Naive thymus-derived CD4-positive, alpha-beta T cell (primary cell): ENCODE measurements at regions of chr4 and their contacts with region 1.

Region 1: GRCh38 chr4:56799824-56800756 is 21.4 kb downstream of the SPINK2 start:
- DNase-seq: peak; percentile 57 to 88 (median 81)
- ATAC-seq: peak; percentile 99
- H3K4me3 ChIP-seq: peak overlapping the region; percentile 56
- H3K4me3 Mint-ChIP-seq: peak overlapping the region; percentile 91 to 100 (median 94)
- H3K27ac ChIP-seq: peak overlapping the region; percentile 72
- H3K27ac Mint-ChIP-seq: peak overlapping the region; percentile 40 to 96 (median 92)
- H3K4me1 ChIP-seq: peaks cover 0 to 2% of the 10 kb centered on the region in 2 donors
- H3K4me1 Mint-ChIP-seq: peaks cover 5 to 33% (median 22%) of the 10 kb centered on the region in 7 donors
- H3K27me3 ChIP-seq: no peaks in the 10 kb centered on the region
- H3K27me3 Mint-ChIP-seq: peaks cover 0 to 28% (median 0%) of the 10 kb centered on the region in 5 donors

Region 2: DNA sequence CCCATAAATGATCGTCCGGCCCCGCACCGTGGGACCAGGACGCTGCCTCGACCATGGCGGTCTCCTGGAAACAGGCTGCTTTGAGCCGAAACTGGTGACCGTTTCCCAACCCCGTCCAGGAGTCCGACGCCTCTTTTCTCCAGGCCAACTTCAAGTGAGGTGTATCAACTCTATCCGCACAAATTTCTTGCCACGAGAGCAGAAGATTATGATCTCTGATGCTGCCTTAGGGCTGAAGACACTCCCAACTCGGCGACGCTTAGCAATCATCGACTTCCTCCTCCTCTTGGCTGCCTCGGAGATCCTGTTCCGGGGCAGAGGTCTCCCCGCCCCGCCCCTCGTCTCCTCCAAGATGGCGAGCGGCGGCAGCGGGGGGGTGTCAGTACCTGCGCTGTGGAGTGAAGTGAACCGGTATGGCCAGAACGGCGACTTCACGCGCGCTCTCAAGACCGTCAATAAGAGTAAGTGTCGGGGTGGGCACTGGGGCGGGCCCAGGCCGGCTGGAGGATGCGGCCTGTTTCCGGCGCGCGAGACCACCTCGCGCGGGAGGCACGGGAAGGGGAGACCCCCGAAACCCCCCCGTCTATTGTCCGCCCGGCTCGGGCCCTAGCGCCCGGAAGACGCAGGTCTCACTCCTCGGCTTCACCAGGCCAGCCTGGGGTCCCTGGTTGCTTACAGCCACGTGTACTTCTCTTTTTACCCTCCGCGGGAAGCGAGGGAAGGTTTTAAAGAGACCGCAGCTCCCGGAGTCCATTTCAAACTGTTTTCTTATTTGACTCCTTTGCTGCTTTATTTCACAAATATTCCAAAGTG is 332.6 kb before region 1 on chr4 and contains the start of gene SRP72:
- CTCF ChIA-PET with region 1: interaction called, 3 read pairs
- POLR2A ChIA-PET with region 1: no interaction called
- intact Hi-C with region 1: loop called (anchors 1 to 5 kb)
- DNase-seq: peak; percentile 80 to 95 (median 88)
- ATAC-seq: peak; percentile 98
- H3K4me3 ChIP-seq: peak within 1 kb of the TSS; percentile 98
- H3K4me3 Mint-ChIP-seq: peak within 1 kb of the TSS; percentile 93 to 100 (median 96)
- H3K27ac ChIP-seq: peak within 1 kb of the TSS; percentile 90
- H3K27ac Mint-ChIP-seq: peak within 1 kb of the TSS; percentile 94 to 99 (median 96)
- H3K4me1 ChIP-seq: peaks cover 25 to 29% of the 10 kb centered on the region in 2 donors
- H3K4me1 Mint-ChIP-seq: peaks cover 46 to 68% (median 62%) of the 10 kb centered on the region in 7 donors
- H3K27me3 ChIP-seq: no peaks in the 10 kb centered on the region
- H3K27me3 Mint-ChIP-seq: no peaks in the 10 kb centered on the region
- total RNA-seq, gene SRP72: 98.4 to 145 (median 109) TPM

Region 3: GRCh38 chr4:56530269-56531148 is 269.6 kb before region 1 on chr4:
- CTCF ChIA-PET with region 1: no interaction called
- POLR2A ChIA-PET with region 1: no interaction called
- intact Hi-C with region 1: loop called in 1 of 2 experiments (anchors 5 kb)
- DNase-seq: peak; percentile 53 to 75 (median 59)
- ATAC-seq: peak; percentile 99
- H3K4me3 ChIP-seq: peak overlapping the region; percentile 91
- H3K4me3 Mint-ChIP-seq: peak overlapping the region in 1 of 10 donors; percentile 70
- H3K27ac ChIP-seq: peak overlapping the region; percentile 44
- H3K27ac Mint-ChIP-seq: peak overlapping the region in 3 of 9 donors; percentile 26 to 55 (median 38)
- H3K4me1 ChIP-seq: peaks cover 0 to 4% of the 10 kb centered on the region in 2 donors
- H3K4me1 Mint-ChIP-seq: peaks cover 0 to 2% (median 0%) of the 10 kb centered on the region in 7 donors
- H3K27me3 ChIP-seq: peaks cover 0 to 4% of the 10 kb centered on the region in 2 donors
- H3K27me3 Mint-ChIP-seq: peaks cover 0 to 22% (median 7%) of the 10 kb centered on the region in 5 donors

Region 4: DNA sequence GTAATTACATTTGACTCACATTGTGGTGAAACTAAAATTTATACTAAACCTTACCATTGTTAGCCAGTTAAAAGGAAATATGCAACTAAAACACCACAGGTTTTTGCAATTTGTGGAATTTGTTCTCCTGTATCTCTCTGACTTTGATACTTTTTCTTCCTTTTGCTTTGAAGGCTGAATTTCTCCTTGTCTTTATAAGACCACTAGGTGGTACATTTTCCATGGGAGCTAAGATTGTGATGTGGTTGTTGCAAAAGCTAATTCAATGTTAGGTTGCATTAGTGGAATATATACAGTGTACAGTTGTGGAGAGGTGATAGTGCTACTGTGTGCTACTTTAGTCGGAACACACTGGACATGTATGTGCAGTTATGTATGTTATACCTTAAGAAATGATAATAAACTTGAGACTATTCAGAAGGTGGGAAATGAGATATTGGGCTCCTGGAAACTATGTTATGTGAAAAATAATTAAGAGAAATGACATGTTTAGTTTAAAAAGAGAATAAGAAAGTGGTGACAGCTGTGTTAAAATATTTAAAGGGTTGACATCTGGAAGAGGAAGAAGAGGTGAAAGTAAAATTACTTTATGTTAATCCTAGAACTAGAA is 224.2 kb before region 1 on chr4:
- CTCF ChIA-PET with region 1: interaction called, 9 read pairs
- POLR2A ChIA-PET with region 1: no interaction called
- intact Hi-C with region 1: loop called (anchors 1 kb)
- DNase-seq: peak in 5 of 9 donors; percentile 7 to 36 (median 14)
- ATAC-seq: peak; percentile 38
- H3K4me3 ChIP-seq: no peak overlapping the region
- H3K4me3 Mint-ChIP-seq: no peak overlapping the region
- H3K27ac ChIP-seq: no peak overlapping the region
- H3K27ac Mint-ChIP-seq: no peak overlapping the region
- H3K4me1 ChIP-seq: no peaks in the 10 kb centered on the region
- H3K4me1 Mint-ChIP-seq: peaks cover 0 to 6% (median 0%) of the 10 kb centered on the region in 7 donors
- H3K27me3 ChIP-seq: no peaks in the 10 kb centered on the region
- H3K27me3 Mint-ChIP-seq: peaks cover 0 to 10% (median 0%) of the 10 kb centered on the region in 5 donors

Region 5: GRCh38 chr4:56668298-56668697 is 131.8 kb before region 1 on chr4:
- CTCF ChIA-PET with region 1: interaction called, 3 read pairs
- POLR2A ChIA-PET with region 1: no interaction called
- intact Hi-C with region 1: loop called (anchors 1 kb)
- DNase-seq: peak in 2 of 9 donors; percentile 25 to 27
- ATAC-seq: no peak
- H3K4me3 ChIP-seq: no peak overlapping the region
- H3K4me3 Mint-ChIP-seq: no peak overlapping the region
- H3K27ac ChIP-seq: no peak overlapping the region
- H3K27ac Mint-ChIP-seq: no peak overlapping the region
- H3K4me1 ChIP-seq: no peaks in the 10 kb centered on the region
- H3K4me1 Mint-ChIP-seq: peaks cover 0 to 1% (median 0%) of the 10 kb centered on the region in 7 donors
- H3K27me3 ChIP-seq: peaks cover 0 to 3% of the 10 kb centered on the region in 2 donors
- H3K27me3 Mint-ChIP-seq: peaks cover 16 to 27% (median 19%) of the 10 kb centered on the region in 5 donors

Region 6: DNA sequence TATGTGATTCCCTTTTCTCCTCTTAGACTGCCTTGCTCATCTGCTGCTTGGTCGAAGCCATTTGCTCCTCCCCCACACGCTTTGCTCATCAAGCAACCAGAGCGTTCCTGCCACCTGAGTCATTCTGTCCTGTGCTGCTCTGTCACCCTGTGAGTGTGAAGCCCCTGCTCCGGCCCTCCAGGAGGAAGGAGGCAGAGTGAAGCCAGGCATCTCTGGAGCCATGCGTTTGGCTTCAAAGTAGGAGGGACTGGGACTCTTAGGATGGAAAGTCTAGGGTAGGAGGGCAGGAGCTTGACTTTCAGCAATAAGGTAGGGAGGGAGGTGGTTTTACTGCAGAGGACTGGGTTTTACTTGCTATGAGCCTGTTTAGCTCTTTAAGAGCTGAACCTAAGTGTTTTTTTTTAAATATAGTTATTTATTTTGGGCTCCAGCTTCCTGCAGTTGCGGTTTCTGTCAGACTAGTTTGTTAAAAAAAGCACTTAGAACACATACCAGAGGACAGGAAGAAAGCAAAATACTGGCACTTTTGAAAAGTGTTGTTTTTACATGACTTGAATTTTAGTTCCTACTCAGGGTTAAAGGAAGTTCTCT is 42.2 kb before region 1 on chr4:
- CTCF ChIA-PET with region 1: interaction called, 8 read pairs
- POLR2A ChIA-PET with region 1: no interaction called
- intact Hi-C with region 1: loop called (anchors 1 kb)
- DNase-seq: peak; percentile 12 to 85 (median 68)
- ATAC-seq: peak; percentile 88
- H3K4me3 ChIP-seq: peak overlapping the region; percentile 46
- H3K4me3 Mint-ChIP-seq: peak overlapping the region; percentile 71 to 91 (median 85)
- H3K27ac ChIP-seq: peak overlapping the region; percentile 65
- H3K27ac Mint-ChIP-seq: peak overlapping the region; percentile 76 to 99 (median 92)
- H3K4me1 ChIP-seq: peaks cover 28 to 29% of the 10 kb centered on the region in 2 donors
- H3K4me1 Mint-ChIP-seq: peaks cover 39 to 76% (median 57%) of the 10 kb centered on the region in 7 donors
- H3K27me3 ChIP-seq: no peaks in the 10 kb centered on the region
- H3K27me3 Mint-ChIP-seq: peaks cover 0 to 14% (median 0%) of the 10 kb centered on the region in 5 donors